ENCODE measurements at regions of chr2 and their contacts with region 1.

Region 1: GRCh38 chr2:69559442-69560146 is 83.9 kb downstream of the AAK1 start:
- DNase-seq: peak; percentile 68
- H3K4me3 Mint-ChIP-seq: no peak overlapping the region
- H3K27ac Mint-ChIP-seq: peak overlapping the region; percentile 30
- H3K4me1 Mint-ChIP-seq: peaks cover 51% of the 10 kb centered on the region
- H3K27me3 Mint-ChIP-seq: no peaks in the 10 kb centered on the region

Region 2: DNA sequence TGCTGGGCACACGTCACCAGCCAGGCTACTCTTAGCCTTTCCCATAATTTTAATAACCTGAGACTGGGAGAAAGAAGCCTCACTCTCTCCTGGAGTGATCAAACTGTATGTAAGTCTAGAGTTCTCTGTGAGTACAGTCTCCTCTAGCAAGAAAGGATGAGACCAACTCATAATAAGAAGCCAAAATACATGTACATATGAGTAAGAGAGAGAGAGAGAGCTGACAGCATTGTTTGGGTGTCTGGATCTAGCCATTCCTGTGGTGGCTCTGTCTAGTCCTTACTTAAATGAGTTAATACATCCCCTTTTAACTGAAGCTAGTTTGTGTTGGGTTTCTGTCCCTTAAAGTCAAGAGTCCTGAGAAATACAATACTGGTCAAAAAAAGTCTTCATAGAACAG is 156.4 kb after region 1 on chr2:
- intact Hi-C with region 1: loop called (anchors 1 kb)
- DNase-seq: no peak
- H3K4me3 Mint-ChIP-seq: no peak overlapping the region
- H3K27ac Mint-ChIP-seq: peak overlapping the region; percentile 1
- H3K4me1 Mint-ChIP-seq: peaks cover 17% of the 10 kb centered on the region
- H3K27me3 Mint-ChIP-seq: peaks cover 3% of the 10 kb centered on the region

Region 3: GRCh38 chr2:69816923-69817542 is 257.4 kb after region 1 on chr2:
- intact Hi-C with region 1: loop called (anchors 1 kb)
- DNase-seq: peak; percentile 93
- H3K4me3 Mint-ChIP-seq: no peak overlapping the region
- H3K27ac Mint-ChIP-seq: no peak overlapping the region
- H3K4me1 Mint-ChIP-seq: peaks cover 5% of the 10 kb centered on the region
- H3K27me3 Mint-ChIP-seq: no peaks in the 10 kb centered on the region